ENCODE measurements at regions of chr5 and their contacts with region 1.

Region 1: DNA sequence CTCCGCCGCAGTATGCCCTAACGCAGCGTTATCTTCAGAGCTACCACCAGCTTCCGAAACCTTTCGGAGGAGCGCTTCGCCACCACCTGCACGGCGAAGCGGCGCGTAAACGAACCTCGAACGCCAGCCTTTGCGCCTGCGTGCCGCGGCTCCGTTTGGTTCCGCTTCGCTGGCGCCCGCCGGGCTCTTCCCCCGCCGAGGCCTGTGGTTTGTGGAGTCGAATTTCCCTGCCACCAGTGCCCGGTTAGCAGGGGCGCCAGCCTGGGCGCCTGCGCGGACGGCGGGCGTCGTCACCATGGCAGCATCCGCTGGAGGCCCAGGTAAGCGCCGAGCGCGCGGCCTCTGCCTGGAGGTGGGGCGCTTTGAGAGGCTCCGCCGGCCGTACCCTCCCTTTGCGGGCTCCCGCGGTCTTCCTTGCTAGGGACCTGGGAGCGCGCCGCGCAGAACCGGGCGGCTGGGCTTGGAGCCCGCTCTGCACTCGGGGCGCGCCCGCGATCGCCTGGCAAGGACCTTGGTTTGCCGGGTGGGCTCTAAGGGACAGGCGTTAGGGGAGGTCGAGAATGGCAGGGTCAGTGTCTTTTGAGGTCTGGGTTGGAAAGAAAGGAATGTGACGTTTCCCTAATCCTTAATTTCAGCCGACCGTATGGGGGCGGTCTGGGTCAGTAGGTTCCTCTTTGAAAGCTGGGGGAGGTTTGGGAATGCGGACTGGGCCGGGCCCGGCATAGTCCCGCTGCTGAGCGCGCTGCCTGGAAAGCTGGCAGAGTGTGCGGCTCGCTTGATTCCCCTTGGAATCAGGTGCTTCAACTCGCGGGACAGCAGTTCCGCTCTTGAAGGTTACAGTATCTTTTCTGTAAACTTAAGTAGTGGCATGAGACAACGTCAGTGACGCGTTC is at the start of gene FAM151B:
- DNase-seq: peak; percentile 88
- H3K4me3 ChIP-seq: peak within 1 kb of the TSS; percentile 53 to 72 (median 64)
- H3K27ac ChIP-seq: peak within 1 kb of the TSS; percentile 76 to 85 (median 80)
- H3K4me1 ChIP-seq: peaks cover 0 to 17% (median 4%) of the 10 kb centered on the region in 4 donors
- H3K27me3 ChIP-seq: no peaks in the 10 kb centered on the region
- CTCF ChIP-seq: no peak
- EP300 ChIP-seq: no peak
- POLR2A ChIP-seq: no peak
- total RNA-seq, gene FAM151B: 1.6 to 3.3 (median 2.9) TPM

Region 2: DNA sequence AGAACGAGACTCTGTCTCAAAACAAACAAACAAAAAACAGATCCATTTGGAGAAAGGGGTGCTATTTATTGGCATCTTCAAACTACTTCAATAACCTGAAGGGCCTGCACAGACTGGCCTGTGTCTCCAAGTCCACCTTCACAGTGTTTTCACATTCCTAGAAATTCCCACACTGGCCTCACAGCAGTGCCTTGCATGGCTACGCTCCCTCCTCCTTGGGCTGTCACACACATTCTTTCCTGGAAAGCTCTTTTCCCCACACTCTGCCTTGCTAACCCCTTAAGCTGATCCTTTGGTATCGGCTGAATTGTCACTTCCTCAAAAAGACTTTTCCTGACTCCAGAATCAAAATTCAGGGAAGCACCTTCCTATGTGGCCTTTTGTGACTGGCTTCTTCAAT is 19.6 kb after region 1 on chr5:
- intact Hi-C with region 1: no loop called
- DNase-seq: no peak
- H3K4me3 ChIP-seq: no peak overlapping the region
- H3K27ac ChIP-seq: no peak overlapping the region
- H3K4me1 ChIP-seq: no peaks in the 10 kb centered on the region
- H3K27me3 ChIP-seq: no peaks in the 10 kb centered on the region
- CTCF ChIP-seq: no peak
- EP300 ChIP-seq: no peak
- POLR2A ChIP-seq: no peak

Region 3: DNA sequence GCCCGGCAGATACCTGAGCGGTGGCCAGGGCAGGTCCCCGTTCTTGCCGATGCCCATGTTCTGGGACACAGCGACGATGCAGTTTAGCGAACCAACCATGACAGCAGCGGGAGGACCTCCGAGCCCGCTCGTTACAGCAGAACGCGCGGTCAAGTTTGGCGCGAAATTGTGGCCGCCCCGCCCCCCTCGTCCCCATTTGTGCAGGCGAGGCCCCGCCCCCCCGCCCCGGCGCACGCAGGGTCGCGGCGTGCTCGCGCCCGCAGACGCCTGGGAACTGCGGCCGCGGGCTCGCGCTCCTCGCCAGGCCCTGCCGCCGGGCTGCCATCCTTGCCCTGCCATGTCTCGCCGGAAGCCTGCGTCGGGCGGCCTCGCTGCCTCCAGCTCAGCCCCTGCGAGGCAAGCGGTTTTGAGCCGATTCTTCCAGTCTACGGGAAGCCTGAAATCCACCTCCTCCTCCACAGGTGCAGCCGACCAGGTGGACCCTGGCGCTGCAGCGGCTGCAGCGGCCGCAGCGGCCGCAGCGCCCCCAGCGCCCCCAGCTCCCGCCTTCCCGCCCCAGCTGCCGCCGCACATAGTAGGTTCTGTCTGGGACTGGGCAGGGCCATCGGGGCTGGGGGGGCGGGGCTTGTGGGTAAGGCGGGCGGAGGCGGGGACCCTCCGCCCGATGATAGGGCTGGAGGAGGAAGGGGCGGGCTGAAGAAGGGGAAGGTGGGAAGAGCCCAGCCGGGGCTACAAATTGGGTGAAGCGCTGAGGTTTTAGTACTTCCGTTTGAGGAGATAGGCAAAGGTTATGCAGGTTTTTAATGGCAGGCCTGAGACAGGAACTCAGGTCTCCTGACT is 166.5 kb after region 1 on chr5 and contains the starts of genes DHFR and MSH3:
- intact Hi-C with region 1: loop called (anchors 5 kb)
- DNase-seq: peak; percentile 89
- H3K4me3 ChIP-seq: peak within 1 kb of the TSS; percentile 75 to 96 (median 84)
- H3K27ac ChIP-seq: peak within 1 kb of the TSS; percentile 89 to 98 (median 94)
- H3K4me1 ChIP-seq: peaks cover 0 to 18% (median 15%) of the 10 kb centered on the region in 4 donors
- H3K27me3 ChIP-seq: no peaks in the 10 kb centered on the region
- CTCF ChIP-seq: no peak
- EP300 ChIP-seq: no peak
- POLR2A ChIP-seq: peak in 1 of 2 donors; percentile 4
- total RNA-seq, gene DHFR: 5.6 to 9.0 (median 8.4) TPM
- total RNA-seq, gene MSH3: 11.8 to 15.3 (median 13.3) TPM

Region 4: GRCh38 chr5:80672140-80672736 is 184.2 kb after region 1 on chr5:
- intact Hi-C with region 1: loop called (anchors 5 kb)
- DNase-seq: peak; percentile 77
- H3K4me3 ChIP-seq: no peak overlapping the region
- H3K27ac ChIP-seq: no peak overlapping the region
- H3K4me1 ChIP-seq: no peaks in the 10 kb centered on the region
- H3K27me3 ChIP-seq: no peaks in the 10 kb centered on the region
- CTCF ChIP-seq: peak; percentile 42 to 76 (median 73)
- EP300 ChIP-seq: no peak
- POLR2A ChIP-seq: no peak